ENCODE measurements at regions of chr1 and their contacts with region 1.

Region 1: DNA sequence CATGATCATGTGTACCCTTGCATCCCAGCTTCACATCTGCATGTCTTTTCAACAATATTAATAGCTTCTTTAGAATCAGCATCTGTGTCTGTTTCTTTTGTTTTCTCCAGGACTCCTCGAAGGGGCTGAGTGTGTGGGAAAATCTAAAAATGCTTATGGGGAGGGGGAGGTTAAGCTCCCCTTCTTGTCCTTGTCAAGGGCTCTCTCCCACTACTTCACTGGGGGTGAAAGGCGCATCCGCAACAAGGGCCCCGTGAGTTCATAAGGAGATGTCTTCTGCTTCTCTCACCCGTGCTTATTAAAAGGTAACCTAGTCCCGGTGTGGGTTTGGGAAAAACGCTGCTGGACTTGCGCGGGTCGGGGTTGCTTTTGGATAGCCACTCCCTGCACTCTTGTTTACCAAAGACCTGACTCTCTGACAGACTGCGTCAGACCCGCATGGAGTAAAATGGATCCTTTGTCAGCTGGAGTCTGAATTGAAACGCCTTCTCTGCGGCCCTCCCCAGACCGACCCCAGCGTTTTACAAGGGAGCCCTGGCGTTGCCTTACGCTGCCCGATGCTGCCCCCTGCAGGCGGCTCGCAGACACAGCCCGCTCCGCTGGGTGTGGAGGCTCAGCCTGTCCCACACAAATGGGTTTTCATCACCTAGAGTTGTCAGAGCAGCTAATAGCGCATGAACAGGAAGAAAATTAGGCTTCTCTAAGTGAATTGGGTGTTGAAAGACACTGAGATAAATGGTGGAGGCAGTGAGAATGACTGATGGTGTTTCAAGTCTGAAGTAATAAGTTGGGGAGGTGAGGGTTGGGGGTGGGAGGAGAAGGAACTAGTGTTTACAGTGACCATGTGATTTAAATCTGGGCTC is 53.8 kb downstream of the IER5 start:
- DNase-seq: peak; percentile 96
- ATAC-seq: peak; percentile 98

Region 2: GRCh38 chr1:180814859-180815587 is 327.3 kb before region 1 on chr1:
- intact Hi-C with region 1: no loop called
- DNase-seq: no peak
- ATAC-seq: no peak

Region 3: DNA sequence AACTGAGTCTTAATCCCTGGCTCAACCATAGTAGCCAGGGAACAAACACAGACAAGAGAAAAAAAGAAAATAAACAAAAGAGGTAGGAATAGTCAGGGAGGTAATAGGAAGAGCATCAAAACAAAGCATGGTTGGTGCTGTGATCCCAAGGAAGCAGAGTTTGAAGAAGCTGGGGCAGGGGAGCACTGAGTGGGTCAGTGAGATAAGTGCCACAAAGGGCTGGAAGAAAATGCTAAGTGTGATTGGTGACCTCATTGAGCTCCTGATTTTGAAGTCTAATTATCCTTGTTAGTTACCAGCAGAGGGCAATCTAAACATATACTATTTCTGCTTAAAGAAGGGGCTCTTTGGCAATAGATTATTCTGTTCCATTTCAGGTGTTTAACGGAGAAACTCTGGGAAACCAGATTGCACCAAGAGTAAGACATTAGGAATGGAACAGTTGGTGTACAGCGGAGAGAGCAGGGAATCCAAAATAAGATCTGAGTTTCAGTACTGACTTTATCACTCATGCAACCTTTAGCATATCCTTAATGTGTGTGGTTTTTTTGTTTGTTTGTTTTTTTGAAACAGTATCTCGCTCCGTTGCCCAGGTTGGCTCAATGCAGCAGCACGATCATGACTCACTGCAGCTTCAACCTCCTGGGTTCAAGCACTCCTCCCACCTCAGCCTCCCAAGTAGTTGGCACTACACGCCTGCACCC is 260.4 kb before region 1 on chr1:
- intact Hi-C with region 1: loop called (anchors 5 kb)
- DNase-seq: no peak
- ATAC-seq: peak; percentile 64

Region 4: DNA sequence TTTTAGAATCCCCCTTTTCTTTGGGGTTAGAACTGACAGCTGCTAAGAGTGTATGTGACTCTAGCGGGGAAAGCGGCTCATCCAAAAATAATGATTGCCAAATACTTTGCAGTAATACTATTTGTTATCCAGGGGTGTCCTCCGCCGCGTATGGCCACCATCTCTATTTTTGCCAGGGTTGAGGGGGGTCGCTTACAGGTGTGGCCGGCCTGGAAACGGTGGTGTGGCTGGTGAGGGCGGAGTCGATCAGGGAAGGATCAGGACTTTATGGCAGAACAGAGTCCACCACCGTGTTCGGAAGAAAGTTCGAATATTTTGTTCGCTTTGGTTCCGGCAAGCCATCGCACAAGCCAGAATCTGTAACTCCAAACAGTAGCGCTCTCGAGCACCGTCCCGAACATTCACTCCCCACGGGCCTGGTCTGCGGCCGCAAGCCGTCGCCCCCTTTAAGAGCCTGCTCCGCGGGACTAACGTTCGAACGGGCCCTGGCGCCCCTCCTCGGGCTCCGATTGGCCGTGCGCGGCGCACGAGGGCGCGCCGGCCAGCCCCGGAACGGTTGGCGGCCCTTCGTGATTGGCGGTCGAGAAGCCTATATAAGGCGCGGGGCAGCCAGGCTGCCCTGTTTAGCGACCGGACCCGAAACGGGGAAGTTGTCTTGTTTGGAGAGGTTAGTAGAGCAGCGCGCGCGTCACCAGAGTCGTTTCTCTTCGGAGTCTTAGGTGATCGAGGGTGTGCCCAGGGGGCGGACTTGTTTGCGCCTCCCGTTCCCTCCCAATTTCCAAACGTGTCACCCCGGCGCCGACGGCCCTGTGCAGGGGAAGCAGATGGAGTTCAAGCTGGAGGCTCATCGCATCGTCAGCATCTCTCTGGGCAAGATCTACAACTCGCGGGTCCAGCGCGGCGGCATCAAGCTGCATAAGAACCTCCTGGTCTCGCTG is 54.0 kb before region 1 on chr1 and contains the start of gene IER5:
- intact Hi-C with region 1: loop called (anchors 5 kb)
- DNase-seq: peak; percentile 98
- ATAC-seq: peak; percentile 98
- total RNA-seq, gene IER5: 10.9 TPM

Measured in sciatic nerve (tissue), 2 donors.